Heart left ventricle (tissue), 16 donors: ENCODE measurements at regions of chr20 and their contacts with region 1.

Region 1: GRCh38 chr20:15026759-15027158 is 689.3 kb upstream of the FLRT3 start:
- DNase-seq: no peak
- ATAC-seq: no peak
- H3K4me3 ChIP-seq: no peak overlapping the region
- H3K27ac ChIP-seq: no peak overlapping the region
- H3K4me1 ChIP-seq: no peaks in the 10 kb centered on the region
- H3K27me3 ChIP-seq: no peaks in the 10 kb centered on the region
- CTCF ChIP-seq: no peak
- POLR2A ChIP-seq: no peak

Region 2: GRCh38 chr20:14764511-14765373 is 262.0 kb before region 1 on chr20:
- intact Hi-C with region 1: no loop called
- DNase-seq: no peak
- ATAC-seq: no peak
- H3K4me3 ChIP-seq: no peak overlapping the region
- H3K27ac ChIP-seq: no peak overlapping the region
- H3K4me1 ChIP-seq: no peaks in the 10 kb centered on the region
- H3K27me3 ChIP-seq: no peaks in the 10 kb centered on the region
- CTCF ChIP-seq: no peak
- POLR2A ChIP-seq: no peak

Region 3: GRCh38 chr20:15071085-15071808 is 44.5 kb after region 1 on chr20:
- intact Hi-C with region 1: loop called in 1 of 10 experiments (anchors 10 kb)
- DNase-seq: no peak
- ATAC-seq: no peak
- H3K4me3 ChIP-seq: no peak overlapping the region
- H3K27ac ChIP-seq: no peak overlapping the region
- H3K4me1 ChIP-seq: no peaks in the 10 kb centered on the region
- H3K27me3 ChIP-seq: no peaks in the 10 kb centered on the region
- CTCF ChIP-seq: no peak
- POLR2A ChIP-seq: no peak